Activated naive CD8-positive, alpha-beta T cell treated with anti-CD3 and anti-CD28 coated beads, Interleukin-2, amount 10 ng/mL, durations not matched to agents 7 days and 5 days (primary cell): ENCODE measurements at regions of chr10 and their contacts with region 1.

Region 1: DNA sequence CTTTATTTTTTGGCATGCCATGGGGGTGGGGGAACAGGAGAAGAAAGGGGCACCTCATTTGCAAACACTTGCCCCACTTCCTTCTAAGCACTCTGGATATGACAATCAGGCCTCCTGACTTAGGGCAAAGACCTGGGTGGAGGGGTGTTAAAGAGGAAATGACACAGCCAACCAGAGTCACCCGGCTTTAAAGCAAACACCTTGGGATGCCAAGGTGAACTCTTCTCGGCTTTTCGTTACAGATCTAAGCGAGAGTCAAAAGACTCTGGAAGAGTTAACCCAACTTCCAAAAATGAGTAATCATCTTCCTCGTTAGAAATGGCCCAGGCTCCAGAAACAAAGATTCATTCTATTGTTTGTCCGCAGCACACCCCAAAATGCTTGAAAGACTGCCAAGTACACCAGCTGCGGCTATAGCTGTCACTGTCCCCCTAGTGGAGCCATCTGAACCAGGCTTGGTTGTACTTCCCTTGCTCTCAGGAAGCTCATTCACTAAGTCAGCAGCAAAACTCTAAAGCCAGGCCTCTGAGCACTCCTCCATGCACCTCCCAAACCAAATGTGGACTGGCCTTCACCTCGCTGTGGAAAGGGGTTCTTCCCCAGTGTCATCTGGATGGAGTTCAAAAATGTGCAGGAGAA is 24.8 kb downstream of the FAM53B start:
- DNase-seq: no peak
- ATAC-seq: peak; percentile 70
- H3K4me3 Mint-ChIP-seq: peak overlapping the region; percentile 62
- H3K27ac Mint-ChIP-seq: peak overlapping the region; percentile 81
- H3K4me1 Mint-ChIP-seq: peaks cover 59% of the 10 kb centered on the region
- H3K27me3 Mint-ChIP-seq: no peaks in the 10 kb centered on the region

Region 2: DNA sequence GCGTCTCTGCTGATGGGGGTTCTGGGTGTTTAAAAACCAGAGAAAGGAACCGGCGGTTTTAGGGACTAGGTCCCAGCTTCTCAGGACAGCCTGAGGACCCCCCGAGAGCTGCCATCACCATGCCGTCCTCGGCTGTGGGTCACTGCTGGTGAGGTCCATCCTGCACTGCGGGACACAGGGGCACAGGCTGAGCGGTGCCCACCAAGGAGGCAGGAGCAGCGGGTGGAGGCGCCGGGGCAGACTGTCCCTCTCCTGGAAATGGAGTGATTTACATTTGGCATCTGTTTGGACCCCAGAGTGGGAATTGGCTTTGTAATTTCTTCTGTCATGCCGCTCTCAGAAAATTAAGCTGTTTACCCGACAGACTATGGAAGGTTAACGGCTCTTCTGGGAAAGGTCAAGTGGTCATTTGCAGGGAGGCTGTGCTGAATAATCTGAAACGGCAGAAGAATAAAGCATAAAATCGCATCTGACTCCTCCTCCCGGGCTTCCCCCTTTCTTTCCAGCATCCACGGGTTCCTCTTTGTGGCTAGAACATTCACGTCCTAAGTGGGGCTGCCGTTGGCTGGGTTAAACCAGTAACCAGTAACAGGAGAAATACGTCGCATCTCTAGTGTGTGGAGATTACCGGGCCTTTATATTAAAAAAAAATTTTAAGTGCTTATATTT is 226.0 kb before region 1 on chr10:
- POLR2A ChIA-PET with region 1: no interaction called
- DNase-seq: no peak
- ATAC-seq: no peak
- H3K4me3 Mint-ChIP-seq: peak overlapping the region; percentile 42
- H3K27ac Mint-ChIP-seq: no peak overlapping the region
- H3K4me1 Mint-ChIP-seq: peaks cover 11% of the 10 kb centered on the region
- H3K27me3 Mint-ChIP-seq: no peaks in the 10 kb centered on the region

Region 3: GRCh38 chr10:124647421-124648130 is 71.8 kb before region 1 on chr10:
- POLR2A ChIA-PET with region 1: interaction called, 20 read pairs
- DNase-seq: peak; percentile 68
- ATAC-seq: peak; percentile 79
- H3K4me3 Mint-ChIP-seq: peak overlapping the region; percentile 63
- H3K27ac Mint-ChIP-seq: peak overlapping the region; percentile 85
- H3K4me1 Mint-ChIP-seq: peaks cover 49% of the 10 kb centered on the region
- H3K27me3 Mint-ChIP-seq: peaks cover 3% of the 10 kb centered on the region

Region 4: DNA sequence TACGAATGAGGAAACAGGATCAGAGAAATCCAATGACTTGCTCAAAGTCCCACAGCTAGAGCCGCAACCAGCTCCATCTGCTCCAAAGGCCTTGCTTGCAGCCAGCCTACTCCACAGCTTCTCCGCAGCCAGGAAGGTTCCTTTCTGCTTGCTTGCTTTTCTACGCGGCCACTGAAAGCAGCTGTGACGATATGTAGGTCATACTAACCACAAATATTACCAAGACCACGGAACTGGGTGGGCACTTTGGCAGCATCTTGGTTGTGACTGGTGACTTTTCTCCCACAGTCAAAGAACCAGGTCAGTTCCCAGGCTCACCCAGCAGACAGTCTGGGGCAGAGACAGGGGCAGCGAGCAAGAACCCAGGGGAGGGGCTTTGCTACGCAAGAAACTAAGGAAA is 61.5 kb before region 1 on chr10:
- POLR2A ChIA-PET with region 1: no interaction called
- DNase-seq: no peak
- ATAC-seq: no peak
- H3K4me3 Mint-ChIP-seq: no peak overlapping the region
- H3K27ac Mint-ChIP-seq: no peak overlapping the region
- H3K4me1 Mint-ChIP-seq: peaks cover 12% of the 10 kb centered on the region
- H3K27me3 Mint-ChIP-seq: no peaks in the 10 kb centered on the region

Region 5: DNA sequence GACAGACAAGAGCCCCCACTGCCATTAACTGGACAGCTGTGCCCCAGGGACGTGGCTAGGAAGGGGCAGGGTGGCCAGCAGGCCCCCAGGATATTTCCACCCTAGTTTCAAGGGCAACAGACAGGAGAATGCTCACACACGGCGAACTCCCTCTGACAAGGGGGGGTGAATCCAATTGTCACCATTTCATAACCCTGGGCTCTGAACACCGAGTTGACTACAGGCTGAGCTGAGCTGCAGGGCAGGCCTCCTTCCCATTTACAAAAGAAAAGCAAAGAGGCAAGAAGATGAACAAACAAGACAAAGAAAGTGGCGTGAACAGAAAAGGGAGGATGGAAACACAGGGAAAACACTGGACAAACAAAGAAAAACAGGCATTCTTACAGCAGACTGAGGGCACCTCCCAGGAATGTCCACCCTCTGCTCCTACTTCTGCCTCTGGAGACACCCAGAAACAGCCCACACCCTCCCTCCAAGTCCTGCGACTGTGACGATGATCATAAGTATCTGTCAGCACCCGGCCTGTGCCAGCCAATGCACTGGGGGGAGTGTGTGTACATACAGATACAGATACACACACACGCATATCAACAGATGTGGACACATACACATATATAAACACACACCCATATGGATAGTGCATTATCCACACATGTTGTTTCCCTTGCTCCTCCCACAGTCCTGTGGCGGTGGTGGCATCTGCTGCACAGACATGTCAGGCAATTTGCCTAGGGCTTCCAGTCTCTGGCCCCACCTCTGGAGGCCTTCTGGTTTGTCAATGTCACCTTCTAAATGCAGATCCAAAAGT is 41.4 kb before region 1 on chr10:
- POLR2A ChIA-PET with region 1: interaction called, 10 read pairs
- DNase-seq: no peak
- ATAC-seq: no peak
- H3K4me3 Mint-ChIP-seq: peak overlapping the region; percentile 65
- H3K27ac Mint-ChIP-seq: peak overlapping the region; percentile 73
- H3K4me1 Mint-ChIP-seq: peaks cover 33% of the 10 kb centered on the region
- H3K27me3 Mint-ChIP-seq: no peaks in the 10 kb centered on the region

Region 6: GRCh38 chr10:124688889-124689670 is 30.3 kb before region 1 on chr10:
- POLR2A ChIA-PET with region 1: interaction called, 17 read pairs
- DNase-seq: no peak
- ATAC-seq: peak; percentile 93
- H3K4me3 Mint-ChIP-seq: peak overlapping the region; percentile 15
- H3K27ac Mint-ChIP-seq: peak overlapping the region; percentile 44
- H3K4me1 Mint-ChIP-seq: peaks cover 39% of the 10 kb centered on the region
- H3K27me3 Mint-ChIP-seq: no peaks in the 10 kb centered on the region

Region 7: GRCh38 chr10:124697830-124698544 is 21.3 kb before region 1 on chr10:
- POLR2A ChIA-PET with region 1: interaction called, 21 read pairs
- DNase-seq: no peak
- ATAC-seq: peak; percentile 34
- H3K4me3 Mint-ChIP-seq: peak overlapping the region; percentile 80
- H3K27ac Mint-ChIP-seq: peak overlapping the region; percentile 98
- H3K4me1 Mint-ChIP-seq: peaks cover 62% of the 10 kb centered on the region
- H3K27me3 Mint-ChIP-seq: no peaks in the 10 kb centered on the region

Region 8: DNA sequence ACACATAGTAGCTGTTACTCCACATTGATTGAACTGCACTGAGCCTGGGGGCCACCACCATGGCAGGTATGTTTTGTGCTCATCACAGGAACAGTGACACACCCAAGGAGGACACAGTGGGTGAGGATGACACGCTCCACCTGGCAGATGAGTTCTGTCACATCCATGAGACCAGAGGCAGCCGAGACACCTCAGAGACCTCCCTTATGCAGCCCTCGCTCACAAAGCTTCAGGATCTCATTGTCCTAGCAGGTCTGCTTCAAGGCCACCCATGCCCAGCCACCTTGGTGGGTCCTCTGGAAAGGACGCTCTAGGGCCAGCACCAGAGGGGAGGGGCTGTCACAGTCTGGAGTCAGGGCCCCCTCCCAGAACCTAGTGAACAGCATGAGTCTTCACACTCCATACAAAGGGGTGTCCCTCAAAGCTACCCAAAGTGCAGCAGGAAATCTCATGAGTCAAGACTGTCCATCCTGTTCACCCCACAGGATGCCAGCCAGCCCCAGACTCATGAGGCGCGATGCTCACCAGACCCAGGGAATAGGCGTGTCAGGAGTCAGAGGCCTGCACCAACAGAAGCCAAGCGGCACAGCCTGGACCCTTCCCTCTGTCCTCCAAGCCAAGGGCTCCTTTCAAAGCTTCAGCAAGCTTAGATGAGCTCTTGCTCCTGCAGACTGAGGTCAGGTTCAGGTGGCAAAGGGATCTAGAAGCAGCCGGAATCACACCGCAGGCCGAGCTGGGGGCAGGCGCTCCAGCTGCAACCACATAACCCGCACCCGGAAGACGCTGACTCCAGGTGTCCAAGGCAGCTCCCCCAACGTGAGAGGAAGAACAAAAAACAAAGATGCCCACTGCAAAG is 15.2 kb after region 1 on chr10:
- POLR2A ChIA-PET with region 1: interaction called, 11 read pairs
- DNase-seq: no peak
- ATAC-seq: peak; percentile 52
- H3K4me3 Mint-ChIP-seq: peak overlapping the region; percentile 18
- H3K27ac Mint-ChIP-seq: peak overlapping the region; percentile 61
- H3K4me1 Mint-ChIP-seq: peaks cover 48% of the 10 kb centered on the region
- H3K27me3 Mint-ChIP-seq: peaks cover 3% of the 10 kb centered on the region

Region 9: GRCh38 chr10:124741281-124741921 is 22.1 kb after region 1 on chr10:
- POLR2A ChIA-PET with region 1: interaction called, 12 read pairs
- DNase-seq: peak; percentile 76
- ATAC-seq: peak; percentile 31
- H3K4me3 Mint-ChIP-seq: peak overlapping the region; percentile 65
- H3K27ac Mint-ChIP-seq: peak overlapping the region; percentile 54
- H3K4me1 Mint-ChIP-seq: peaks cover 40% of the 10 kb centered on the region
- H3K27me3 Mint-ChIP-seq: peaks cover 16% of the 10 kb centered on the region

Region 10: DNA sequence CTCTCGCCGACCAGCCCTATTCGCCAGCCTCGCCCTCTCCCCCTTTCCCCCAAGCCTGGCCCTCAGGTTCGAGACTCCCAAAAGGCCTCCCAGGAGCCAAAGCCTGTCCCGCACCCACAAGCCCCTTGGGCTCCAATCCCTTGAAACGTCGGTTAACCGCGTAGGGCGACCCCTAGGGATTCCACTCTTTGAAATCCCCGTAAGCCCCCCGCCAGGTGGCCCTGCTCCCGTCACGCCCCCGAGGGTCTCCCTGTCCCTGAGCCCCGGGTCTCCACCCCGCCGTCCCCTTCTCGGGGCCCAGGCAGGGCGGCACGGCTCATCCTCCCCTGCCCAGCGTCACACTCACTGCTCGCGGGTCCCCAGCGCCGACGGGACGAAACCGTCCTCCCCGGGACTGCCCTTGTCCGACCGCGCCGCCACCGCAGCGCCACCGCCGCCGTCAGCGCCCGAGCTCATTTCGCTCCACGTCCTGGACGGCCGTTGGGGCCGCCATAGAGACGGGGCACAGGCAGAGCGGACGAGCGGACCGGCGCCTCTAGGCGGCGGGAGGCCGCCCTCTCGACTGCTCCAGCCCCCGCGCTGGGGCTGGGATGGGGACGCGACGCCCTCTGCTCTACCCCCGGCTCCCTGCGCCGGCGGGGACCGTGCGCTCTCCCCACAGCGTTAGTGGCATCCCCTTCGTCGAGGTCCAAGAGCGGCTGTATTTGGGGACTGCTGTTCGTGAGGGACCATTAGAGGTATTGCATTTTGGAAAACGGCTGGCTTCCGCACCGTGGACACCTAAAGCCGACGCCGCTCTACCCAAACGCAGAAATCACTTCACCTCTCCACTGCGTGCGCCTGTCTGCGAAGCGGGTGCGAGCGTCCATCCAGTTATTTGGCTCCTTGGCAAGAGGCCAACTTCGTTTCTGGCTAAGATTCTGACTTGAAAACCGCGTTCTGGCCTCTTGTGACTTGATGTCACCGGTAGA is 72.3 kb after region 1 on chr10 and contains the start of gene EEF1AKMT2:
- POLR2A ChIA-PET with region 1: no interaction called
- DNase-seq: peak; percentile 89
- ATAC-seq: peak; percentile 95
- H3K4me3 Mint-ChIP-seq: peak within 1 kb of the TSS; percentile 97
- H3K27ac Mint-ChIP-seq: peak within 1 kb of the TSS; percentile 98
- H3K4me1 Mint-ChIP-seq: peaks cover 18% of the 10 kb centered on the region
- H3K27me3 Mint-ChIP-seq: no peaks in the 10 kb centered on the region
- total RNA-seq, gene EEF1AKMT2: 22.0 to 22.8 TPM